PC-3 (cell line): ENCODE measurements at regions of chr18 and their contacts with region 1.

Region 1: GRCh38 chr18:60541661-60542060 is 169.1 kb upstream of the MC4R start:
- DNase-seq: no peak
- ATAC-seq: no peak
- H3K4me3 ChIP-seq: no peak overlapping the region
- H3K27ac ChIP-seq: no peak overlapping the region
- H3K4me1 ChIP-seq: no peaks in the 10 kb centered on the region
- H3K27me3 ChIP-seq: no peaks in the 10 kb centered on the region
- CTCF ChIP-seq: no peak

Region 2: GRCh38 chr18:60506682-60507081 is 35.0 kb before region 1 on chr18:
- CTCF ChIA-PET with region 1: no interaction called
- POLR2A ChIA-PET with region 1: no interaction called
- intact Hi-C with region 1: loop called (anchors 2 kb)
- DNase-seq: no peak
- ATAC-seq: peak; percentile 37
- H3K4me3 ChIP-seq: no peak overlapping the region
- H3K27ac ChIP-seq: no peak overlapping the region
- H3K4me1 ChIP-seq: peaks cover 7% of the 10 kb centered on the region; the same call in 1 of the 2 replicates
- H3K27me3 ChIP-seq: no peaks in the 10 kb centered on the region
- CTCF ChIP-seq: no peak